ENCODE measurements at regions of chr6 and their contacts with region 1.

Region 1: GRCh38 chr6:52399511-52400312 is 20.4 kb upstream of the EFHC1 start:
- DNase-seq: peak; percentile 59
- H3K4me3 ChIP-seq: no peak overlapping the region
- H3K27ac ChIP-seq: no peak overlapping the region
- H3K4me1 ChIP-seq: no peaks in the 10 kb centered on the region
- H3K27me3 ChIP-seq: no peaks in the 10 kb centered on the region
- CTCF ChIP-seq: peak; percentile 75 to 81
- POLR2A ChIP-seq: no peak

Region 2: DNA sequence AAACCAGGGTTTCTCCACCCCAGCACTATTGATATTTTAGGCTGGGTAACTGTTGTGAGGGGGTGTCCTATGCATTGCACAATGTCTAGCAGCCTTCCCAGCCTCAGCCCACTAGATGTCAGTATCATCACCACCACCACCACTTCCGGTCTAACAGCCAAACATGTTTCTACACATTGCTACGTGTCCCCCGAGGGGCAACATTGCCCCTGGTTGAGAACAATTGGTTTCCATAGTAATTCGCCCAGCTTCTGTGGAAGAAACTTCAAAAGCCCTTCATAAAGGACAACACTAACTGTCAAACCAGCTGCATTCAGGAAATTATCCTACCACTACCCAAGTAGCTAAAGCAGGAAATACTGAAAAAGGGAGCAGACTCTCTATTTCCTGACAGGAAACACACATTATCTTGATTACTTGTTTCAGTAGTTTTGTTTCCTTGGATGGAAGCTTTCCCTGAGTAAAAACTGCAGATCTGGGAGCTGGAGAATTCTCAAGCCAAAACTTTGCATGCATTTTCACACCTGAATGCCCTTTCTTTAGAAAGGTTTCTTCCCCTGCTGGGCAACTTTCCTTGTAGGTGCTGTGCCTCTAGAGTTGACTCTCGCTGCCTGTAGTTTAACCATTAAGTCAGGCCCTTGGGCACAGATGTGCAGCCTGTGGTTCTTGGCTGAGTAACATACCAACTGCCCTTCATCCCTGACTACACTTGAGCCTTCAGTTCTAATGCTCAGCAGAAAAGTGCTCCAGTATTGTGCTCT is 335.9 kb before region 1 on chr6:
- CTCF ChIA-PET with region 1: interaction called, 3 read pairs
- POLR2A ChIA-PET with region 1: no interaction called
- dilution Hi-C with region 1: no loop called
- intact Hi-C with region 1: loop called (anchors 10 kb)
- DNase-seq: peak; percentile 17
- H3K4me3 ChIP-seq: no peak overlapping the region
- H3K27ac ChIP-seq: no peak overlapping the region
- H3K4me1 ChIP-seq: peaks cover 7% of the 10 kb centered on the region
- H3K27me3 ChIP-seq: no peaks in the 10 kb centered on the region
- CTCF ChIP-seq: peak; percentile 33 to 52
- POLR2A ChIP-seq: no peak

Region 3: GRCh38 chr6:52162940-52163908 is 236.5 kb before region 1 on chr6:
- CTCF ChIA-PET with region 1: interaction called, 23 read pairs
- POLR2A ChIA-PET with region 1: no interaction called
- dilution Hi-C with region 1: no loop called
- intact Hi-C with region 1: loop called (anchors 1 kb)
- DNase-seq: peak; percentile 16
- H3K4me3 ChIP-seq: no peak overlapping the region
- H3K27ac ChIP-seq: no peak overlapping the region
- H3K4me1 ChIP-seq: no peaks in the 10 kb centered on the region
- H3K27me3 ChIP-seq: peaks cover 2 to 7% of the 10 kb centered on the region in 2 experiments
- CTCF ChIP-seq: peak; percentile 12 to 24
- POLR2A ChIP-seq: no peak

Region 4: DNA sequence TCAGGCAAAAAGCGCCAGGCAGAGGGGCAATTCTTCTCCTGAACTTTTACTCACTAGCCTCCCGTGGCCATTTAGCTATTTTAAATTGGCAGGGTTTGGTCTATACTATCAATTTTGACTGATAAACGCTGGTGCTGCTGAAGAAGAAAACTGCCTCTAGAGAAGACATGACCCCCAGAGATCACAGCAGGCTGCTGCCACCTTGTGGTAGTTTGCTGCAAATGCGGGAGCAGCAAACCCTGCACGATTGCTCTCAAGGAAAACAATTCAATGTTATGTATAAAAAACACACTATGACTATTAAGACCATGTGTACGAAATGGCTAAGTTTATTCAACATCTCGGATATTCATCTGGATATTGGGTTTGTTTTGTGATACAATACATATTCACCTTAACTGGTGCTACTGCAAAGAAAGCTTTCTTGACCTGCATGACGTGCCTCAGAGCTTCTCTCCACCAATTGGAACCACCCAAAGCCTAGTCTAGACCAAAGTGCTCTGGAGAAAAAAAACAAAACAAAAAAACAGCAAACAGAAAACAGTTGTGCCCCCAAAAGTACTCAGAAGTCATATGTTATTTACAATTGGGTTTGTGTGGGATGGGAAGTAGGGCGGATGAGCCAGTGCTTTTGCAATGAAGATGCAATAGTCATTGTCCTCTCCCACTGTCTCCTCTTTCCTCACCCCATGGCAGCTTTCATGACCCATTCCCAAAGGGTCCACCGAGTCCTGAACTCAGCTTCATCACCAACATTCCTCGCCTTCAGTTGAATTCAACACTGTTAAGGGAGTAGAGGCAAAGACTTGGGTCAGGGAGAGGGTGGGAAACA is 135.8 kb before region 1 on chr6:
- CTCF ChIA-PET with region 1: interaction called, 20 read pairs
- POLR2A ChIA-PET with region 1: no interaction called
- dilution Hi-C with region 1: no loop called
- intact Hi-C with region 1: no loop called
- DNase-seq: peak; percentile 70
- H3K4me3 ChIP-seq: no peak overlapping the region
- H3K27ac ChIP-seq: no peak overlapping the region
- H3K4me1 ChIP-seq: peaks cover 6% of the 10 kb centered on the region
- H3K27me3 ChIP-seq: no peaks in the 10 kb centered on the region
- CTCF ChIP-seq: peak; percentile 91 to 93
- POLR2A ChIP-seq: no peak

Region 5: GRCh38 chr6:52284460-52285176 is 115.1 kb before region 1 on chr6 and contains the start of gene MCM3:
- CTCF ChIA-PET with region 1: interaction called, 104 read pairs
- POLR2A ChIA-PET with region 1: no interaction called
- dilution Hi-C with region 1: loop called (anchors 25 kb)
- intact Hi-C with region 1: loop called (anchors 1 kb)
- DNase-seq: peak; percentile 100
- H3K4me3 ChIP-seq: peak within 1 kb of the TSS; percentile 59 to 92 (median 71)
- H3K27ac ChIP-seq: peak within 1 kb of the TSS; percentile 51
- H3K4me1 ChIP-seq: peaks cover 15% of the 10 kb centered on the region
- H3K27me3 ChIP-seq: no peaks in the 10 kb centered on the region
- CTCF ChIP-seq: no peak
- POLR2A ChIP-seq: peak; percentile 47
- total RNA-seq, gene MCM3: 80.6 and 81.6 TPM in 2 replicates

Region 6: DNA sequence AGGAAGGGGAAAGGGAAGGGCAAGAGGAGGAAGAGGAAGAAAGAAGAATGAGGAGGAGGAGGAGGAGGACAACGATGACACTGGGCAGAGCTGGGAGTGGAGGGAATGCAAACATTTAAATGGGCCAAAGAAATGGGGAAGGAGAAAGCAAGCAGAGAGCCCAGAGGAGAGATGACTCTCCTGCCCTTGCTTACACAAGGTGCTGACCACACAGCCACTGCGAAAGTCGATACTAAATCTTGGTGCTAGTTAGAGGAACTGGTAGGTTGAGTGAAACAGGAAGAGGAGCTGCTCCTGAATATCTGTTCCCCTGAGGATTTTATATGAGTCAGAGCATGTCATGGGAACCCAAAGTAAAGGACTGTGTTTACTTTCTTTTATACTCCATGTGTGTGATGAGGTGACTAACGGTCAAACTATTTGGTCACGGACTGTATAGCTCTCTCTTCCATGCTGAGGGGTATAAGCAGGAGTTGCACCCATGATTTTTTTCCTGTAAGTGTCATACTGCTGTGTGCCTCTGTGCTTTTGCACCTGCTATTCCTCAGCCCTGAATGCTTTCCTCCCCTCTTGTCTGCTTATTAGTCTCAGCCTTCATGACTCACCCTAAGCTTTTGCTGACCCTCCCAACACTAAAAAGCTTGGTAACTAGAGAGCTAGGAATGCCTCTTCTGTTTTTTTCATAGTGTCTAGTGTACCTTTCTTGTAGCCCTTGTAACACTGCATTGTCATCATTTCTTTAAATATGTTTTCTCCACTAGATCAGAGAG is 47.3 kb before region 1 on chr6:
- CTCF ChIA-PET with region 1: interaction called, 11 read pairs
- POLR2A ChIA-PET with region 1: no interaction called
- dilution Hi-C with region 1: no loop called
- intact Hi-C with region 1: no loop called
- DNase-seq: peak; percentile 85
- H3K4me3 ChIP-seq: no peak overlapping the region
- H3K27ac ChIP-seq: peak overlapping the region; percentile 26
- H3K4me1 ChIP-seq: peaks cover 13% of the 10 kb centered on the region
- H3K27me3 ChIP-seq: peaks cover 1 to 2% of the 10 kb centered on the region in 2 experiments
- CTCF ChIP-seq: no peak
- POLR2A ChIP-seq: no peak

Region 7: DNA sequence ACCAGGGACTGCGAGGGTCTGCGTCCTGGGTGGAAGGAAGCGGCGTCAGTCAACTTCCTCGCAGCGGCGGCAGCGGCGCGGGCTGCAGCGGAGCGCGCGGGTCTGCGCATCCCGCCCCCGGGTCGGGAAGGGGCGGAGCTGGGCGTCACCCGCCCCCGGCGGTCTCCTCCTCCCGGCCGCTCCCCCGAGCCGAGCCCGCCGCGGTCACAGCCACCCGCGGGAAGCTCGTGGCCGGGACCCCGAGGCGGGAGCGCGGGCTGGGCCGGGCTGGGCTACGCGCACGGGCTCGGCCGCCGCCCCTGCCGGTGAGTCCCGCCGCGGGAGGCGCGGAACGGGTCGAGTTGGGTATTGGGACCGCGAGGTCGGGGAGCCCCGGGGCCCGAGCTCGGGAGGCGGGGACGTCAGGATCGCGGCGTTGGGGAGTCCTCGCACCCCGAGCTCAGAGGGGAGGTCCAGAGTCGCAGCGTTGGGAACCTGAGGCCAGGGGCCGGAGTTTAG is 37.7 kb before region 1 on chr6 and contains the start of gene PAQR8:
- CTCF ChIA-PET with region 1: interaction called, 26 read pairs
- POLR2A ChIA-PET with region 1: interaction called, 3 read pairs
- dilution Hi-C with region 1: no loop called
- intact Hi-C with region 1: loop called (anchors 1 kb)
- DNase-seq: peak; percentile 66
- H3K4me3 ChIP-seq: peak within 1 kb of the TSS; percentile 78 to 97 (median 88)
- H3K27ac ChIP-seq: peak within 1 kb of the TSS; percentile 41
- H3K4me1 ChIP-seq: peaks cover 12% of the 10 kb centered on the region
- H3K27me3 ChIP-seq: no peaks in the 10 kb centered on the region
- CTCF ChIP-seq: no peak
- POLR2A ChIP-seq: peak; percentile 42
- total RNA-seq, gene PAQR8: 6.0 TPM in 2 replicates

Measured in endothelial cell of umbilical vein (primary cell).